CD8-positive, alpha-beta T cell (primary cell): ENCODE measurements at regions of chr12 and their contacts with region 1.

Region 1: DNA sequence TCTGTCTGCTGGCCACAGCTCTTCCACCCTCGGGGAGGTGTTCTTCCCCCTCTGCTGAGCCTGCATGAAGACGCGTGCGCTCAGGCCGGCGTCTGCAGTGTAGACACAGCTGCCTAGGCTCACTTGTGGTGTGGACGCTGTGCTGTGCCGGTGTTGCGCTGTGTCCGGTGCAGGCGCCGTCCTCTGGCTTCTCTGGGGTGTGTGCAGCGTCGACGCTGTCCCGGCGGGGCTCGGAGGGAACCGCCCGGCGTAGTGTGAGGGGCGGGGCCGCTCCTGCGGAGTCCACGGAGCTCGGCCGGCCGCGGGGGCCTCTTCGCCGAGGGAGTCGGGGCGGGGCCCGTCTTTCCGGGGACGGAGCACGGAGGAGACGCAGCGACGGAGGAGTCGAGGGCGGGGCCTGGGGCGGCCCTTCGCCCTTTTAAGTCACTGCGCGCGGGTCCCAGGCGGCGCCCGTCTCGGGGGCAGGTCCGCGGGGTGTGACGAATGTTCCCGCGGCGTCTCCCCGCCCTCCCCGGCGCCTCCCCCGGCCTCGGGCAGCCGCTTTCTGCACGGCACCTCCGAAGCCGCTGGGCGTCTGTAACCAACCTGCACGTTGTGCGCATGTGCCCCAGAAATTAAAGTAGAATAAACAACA is 45.2 kb downstream of the NOC4L start:
- DNase-seq: peak; percentile 88 to 97 (median 93)
- ATAC-seq: peak; percentile 88
- H3K4me3 ChIP-seq: peak overlapping the region; percentile 71 to 94
- H3K4me3 Mint-ChIP-seq: peak overlapping the region; percentile 94
- H3K27ac ChIP-seq: peak overlapping the region; percentile 80 to 81
- H3K27ac Mint-ChIP-seq: peak overlapping the region; percentile 96
- H3K4me1 ChIP-seq: peaks cover 47% of the 10 kb centered on the region
- H3K4me1 Mint-ChIP-seq: peaks cover 50% of the 10 kb centered on the region
- H3K27me3 ChIP-seq: no peaks in the 10 kb centered on the region
- H3K27me3 Mint-ChIP-seq: no peaks in the 10 kb centered on the region
- CTCF ChIP-seq: no peak

Region 2: DNA sequence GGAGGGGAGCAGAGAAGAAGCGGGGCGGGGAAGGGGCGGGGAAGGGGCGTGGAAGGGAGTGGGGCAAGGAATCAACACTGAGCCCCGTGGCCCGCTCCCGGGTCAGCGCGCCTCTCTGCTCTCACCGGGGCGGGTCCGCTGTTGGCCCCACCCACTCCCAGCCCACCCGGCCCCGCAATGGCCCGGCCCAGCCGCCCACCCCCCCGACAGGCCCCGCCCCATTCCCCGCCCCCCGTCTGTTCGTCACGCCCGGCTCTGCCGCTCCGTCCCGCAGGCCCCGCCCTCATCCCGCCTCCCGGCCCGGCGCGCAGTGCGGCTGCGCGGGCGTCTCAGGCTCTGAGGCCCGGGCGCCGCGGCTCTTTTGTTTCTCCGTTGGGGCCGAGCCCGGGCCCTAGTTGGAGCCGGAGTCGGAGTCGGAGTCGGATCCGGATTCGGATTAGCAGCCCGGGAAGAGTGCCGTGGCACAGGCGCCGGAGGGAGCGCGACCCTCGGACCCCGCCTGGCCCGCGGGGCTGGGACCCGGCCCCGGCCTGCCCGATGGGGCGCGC is 295.1 kb before region 1 on chr12 and contains the start of gene ULK1:
- CTCF ChIA-PET with region 1: no interaction called
- POLR2A ChIA-PET with region 1: no interaction called
- intact Hi-C with region 1: loop called in 1 of 2 experiments (anchors 5 kb)
- DNase-seq: peak; percentile 82 to 96 (median 92)
- ATAC-seq: peak; percentile 85
- H3K4me3 ChIP-seq: peak within 1 kb of the TSS; percentile 55 to 77
- H3K4me3 Mint-ChIP-seq: peak within 1 kb of the TSS; percentile 90
- H3K27ac ChIP-seq: peak within 1 kb of the TSS in 1 of 2 experiments; percentile 43
- H3K27ac Mint-ChIP-seq: peak within 1 kb of the TSS; percentile 79
- H3K4me1 ChIP-seq: peaks cover 16% of the 10 kb centered on the region
- H3K4me1 Mint-ChIP-seq: peaks cover 18% of the 10 kb centered on the region
- H3K27me3 ChIP-seq: no peaks in the 10 kb centered on the region
- H3K27me3 Mint-ChIP-seq: no peaks in the 10 kb centered on the region
- CTCF ChIP-seq: no peak
- total RNA-seq, gene ULK1: 76.6 to 79.9 TPM

Region 3: GRCh38 chr12:132083941-132084620 is 105.4 kb before region 1 on chr12:
- CTCF ChIA-PET with region 1: no interaction called
- POLR2A ChIA-PET with region 1: no interaction called
- intact Hi-C with region 1: loop called in 1 of 2 experiments (anchors 2 kb)
- DNase-seq: peak; percentile 74 to 94 (median 85)
- ATAC-seq: peak; percentile 92
- H3K4me3 ChIP-seq: peak overlapping the region; percentile 62 to 63
- H3K4me3 Mint-ChIP-seq: peak overlapping the region; percentile 85
- H3K27ac ChIP-seq: peak overlapping the region; percentile 70 to 88
- H3K27ac Mint-ChIP-seq: peak overlapping the region; percentile 85
- H3K4me1 ChIP-seq: peaks cover 23% of the 10 kb centered on the region
- H3K4me1 Mint-ChIP-seq: peaks cover 30% of the 10 kb centered on the region
- H3K27me3 ChIP-seq: no peaks in the 10 kb centered on the region
- H3K27me3 Mint-ChIP-seq: no peaks in the 10 kb centered on the region
- CTCF ChIP-seq: no peak

Region 4: DNA sequence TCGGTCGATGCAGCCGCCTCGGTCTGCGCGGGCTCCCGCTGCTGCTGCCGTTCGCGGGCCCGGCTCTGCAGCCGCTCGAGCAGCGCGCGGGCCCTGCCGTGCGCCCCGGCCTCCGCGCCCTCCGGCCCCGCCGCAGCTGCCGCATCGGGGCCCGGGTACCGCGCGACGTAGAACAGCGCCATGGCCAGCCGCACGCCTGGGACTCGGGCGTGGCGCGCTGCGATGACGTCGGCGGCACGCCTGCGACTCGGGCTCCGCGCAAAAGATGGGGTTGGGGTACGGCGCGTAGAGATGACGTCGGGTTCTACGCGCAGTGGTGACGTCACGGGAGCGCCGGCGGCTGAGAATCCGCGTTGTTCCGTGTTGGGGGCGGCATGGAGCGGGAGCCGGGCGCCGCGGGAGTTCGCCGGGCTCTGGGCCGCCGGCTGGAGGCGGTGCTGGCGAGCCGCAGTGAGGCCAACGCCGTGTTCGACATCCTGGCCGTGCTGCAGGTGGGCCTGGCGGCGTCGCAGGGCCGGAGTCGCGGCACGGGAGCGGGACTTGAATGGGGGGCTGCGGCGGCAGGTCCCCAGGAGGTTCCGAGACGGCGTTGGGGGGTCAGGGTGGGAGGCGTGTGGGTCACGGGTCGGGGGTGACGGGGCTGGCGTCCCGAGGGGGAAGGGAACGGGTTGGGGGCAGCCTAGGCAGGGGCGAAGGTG is 45.2 kb before region 1 on chr12 and contains the starts of genes DDX51 and NOC4L:
- CTCF ChIA-PET with region 1: interaction called, 4 read pairs
- POLR2A ChIA-PET with region 1: interaction called, 3 read pairs
- intact Hi-C with region 1: loop called (anchors 1 to 2 kb)
- DNase-seq: peak; percentile 92 to 98 (median 96)
- ATAC-seq: peak; percentile 89
- H3K4me3 ChIP-seq: peak within 1 kb of the TSS; percentile 80 to 98
- H3K4me3 Mint-ChIP-seq: peak within 1 kb of the TSS; percentile 95
- H3K27ac ChIP-seq: peak within 1 kb of the TSS; percentile 84 to 90
- H3K27ac Mint-ChIP-seq: peak within 1 kb of the TSS; percentile 98
- H3K4me1 ChIP-seq: peaks cover 24% of the 10 kb centered on the region
- H3K4me1 Mint-ChIP-seq: peaks cover 27% of the 10 kb centered on the region
- H3K27me3 ChIP-seq: no peaks in the 10 kb centered on the region
- H3K27me3 Mint-ChIP-seq: no peaks in the 10 kb centered on the region
- CTCF ChIP-seq: no peak
- total RNA-seq, gene DDX51: 61.5 to 66.5 TPM
- total RNA-seq, gene NOC4L: 25.8 to 28.3 TPM

Region 5: GRCh38 chr12:132178801-132179401 is 10.6 kb before region 1 on chr12:
- CTCF ChIA-PET with region 1: interaction called, 7 read pairs
- POLR2A ChIA-PET with region 1: interaction called, 10 read pairs
- intact Hi-C with region 1: no loop called
- DNase-seq: peak in 4 of 9 experiments; percentile 31 to 68 (median 58)
- ATAC-seq: peak; percentile 79
- H3K4me3 ChIP-seq: peak overlapping the region; percentile 1 to 7
- H3K4me3 Mint-ChIP-seq: peak overlapping the region; percentile 75
- H3K27ac ChIP-seq: peak overlapping the region in 1 of 2 experiments; percentile 17
- H3K27ac Mint-ChIP-seq: peak overlapping the region; percentile 81
- H3K4me1 ChIP-seq: peaks cover 26% of the 10 kb centered on the region
- H3K4me1 Mint-ChIP-seq: peaks cover 28% of the 10 kb centered on the region
- H3K27me3 ChIP-seq: peaks cover 4 to 7% of the 10 kb centered on the region in 2 experiments
- H3K27me3 Mint-ChIP-seq: peaks cover 7% of the 10 kb centered on the region
- CTCF ChIP-seq: no peak

Region 6: DNA sequence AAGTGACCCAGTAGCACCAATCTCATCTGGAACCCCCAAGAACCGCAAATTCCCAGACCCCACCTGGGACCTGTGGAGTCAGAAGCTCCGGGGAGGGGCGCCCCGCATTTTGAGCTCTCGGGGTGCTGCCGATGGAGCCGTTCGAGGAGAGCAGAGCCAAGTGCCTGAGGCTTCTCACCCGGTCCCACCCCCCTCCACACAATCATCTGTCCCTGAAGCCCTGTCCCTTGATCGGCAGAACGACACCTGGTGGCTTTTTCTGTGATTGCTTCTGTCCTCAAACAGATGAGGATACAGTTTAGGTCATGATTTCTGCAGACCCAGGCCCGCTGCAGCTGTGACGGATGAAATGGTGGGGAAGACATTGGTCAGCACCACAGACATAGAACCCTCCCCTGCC is 29.4 kb after region 1 on chr12:
- CTCF ChIA-PET with region 1: interaction called, 8 read pairs
- POLR2A ChIA-PET with region 1: interaction called, 3 read pairs
- intact Hi-C with region 1: loop called in 1 of 2 experiments (anchors 2 kb)
- DNase-seq: peak in 7 of 9 experiments; percentile 6 to 74 (median 53)
- ATAC-seq: peak; percentile 72
- H3K4me3 ChIP-seq: no peak overlapping the region
- H3K4me3 Mint-ChIP-seq: no peak overlapping the region
- H3K27ac ChIP-seq: no peak overlapping the region
- H3K27ac Mint-ChIP-seq: no peak overlapping the region
- H3K4me1 ChIP-seq: peaks cover 10% of the 10 kb centered on the region
- H3K4me1 Mint-ChIP-seq: peaks cover 11% of the 10 kb centered on the region
- H3K27me3 ChIP-seq: peaks cover 0 to 4% of the 10 kb centered on the region in 2 experiments
- H3K27me3 Mint-ChIP-seq: peaks cover 20% of the 10 kb centered on the region
- CTCF ChIP-seq: peak; percentile 61

Region 7: GRCh38 chr12:132321321-132322118 is 132.0 kb after region 1 on chr12:
- CTCF ChIA-PET with region 1: no interaction called
- POLR2A ChIA-PET with region 1: no interaction called
- intact Hi-C with region 1: no loop called
- DNase-seq: no peak
- ATAC-seq: no peak
- H3K4me3 ChIP-seq: no peak overlapping the region
- H3K4me3 Mint-ChIP-seq: no peak overlapping the region
- H3K27ac ChIP-seq: no peak overlapping the region
- H3K27ac Mint-ChIP-seq: no peak overlapping the region
- H3K4me1 ChIP-seq: no peaks in the 10 kb centered on the region
- H3K4me1 Mint-ChIP-seq: peaks cover 5% of the 10 kb centered on the region
- H3K27me3 ChIP-seq: no peaks in the 10 kb centered on the region
- H3K27me3 Mint-ChIP-seq: peaks cover 13% of the 10 kb centered on the region
- CTCF ChIP-seq: no peak

Region 8: DNA sequence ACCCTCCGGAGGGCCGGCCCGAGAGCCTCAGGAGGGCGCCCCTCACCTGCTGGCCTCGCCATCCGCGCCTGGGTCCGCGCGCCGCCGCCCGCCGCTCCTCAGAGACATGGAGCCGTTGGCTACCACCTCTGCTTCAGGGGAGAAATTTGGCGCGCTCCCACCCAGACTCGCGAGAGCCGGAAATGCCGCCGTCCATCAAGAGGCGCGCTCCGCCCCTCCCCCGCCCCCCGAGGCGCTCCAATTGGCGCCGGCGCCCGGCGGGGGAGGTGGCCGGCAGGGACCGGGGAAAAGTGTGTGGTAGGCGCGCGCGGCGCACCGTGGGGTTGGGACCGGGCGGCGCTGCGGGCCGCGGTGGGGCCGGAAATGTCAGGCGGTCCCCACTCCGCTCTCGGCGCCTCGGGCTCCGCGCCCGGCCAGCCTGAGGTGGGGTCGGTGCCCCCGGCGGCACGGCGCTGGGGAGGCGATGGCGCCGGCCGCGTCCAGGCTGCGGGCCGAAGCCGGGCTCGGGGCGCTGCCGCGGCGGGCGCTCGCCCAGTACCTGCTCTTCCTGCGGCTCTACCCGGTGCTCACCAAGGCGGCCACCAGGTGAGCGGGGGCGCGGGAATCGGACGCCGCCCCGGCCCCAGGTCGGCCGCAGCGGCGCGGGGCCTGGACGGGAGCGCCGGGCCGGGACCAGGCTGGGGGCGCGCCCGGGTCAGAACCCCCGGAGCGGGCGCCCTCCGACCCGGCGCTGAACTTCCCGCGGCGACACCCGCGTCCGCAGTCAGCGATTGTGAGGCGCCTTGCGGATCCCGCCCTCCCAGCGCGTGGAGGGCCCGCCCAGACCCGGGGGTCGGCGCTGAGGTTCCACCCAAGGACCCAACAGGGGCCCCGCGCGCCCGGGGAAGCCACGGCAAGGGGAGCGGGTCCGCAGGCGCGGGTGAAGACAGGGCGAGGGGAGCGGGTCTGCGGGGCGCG is 498.0 kb after region 1 on chr12 and contains the starts of genes POLE and PXMP2:
- CTCF ChIA-PET with region 1: no interaction called
- POLR2A ChIA-PET with region 1: no interaction called
- intact Hi-C with region 1: loop called in 1 of 2 experiments (anchors 2 kb)
- DNase-seq: peak; percentile 88 to 98 (median 94)
- ATAC-seq: peak; percentile 95
- H3K4me3 ChIP-seq: peak within 1 kb of the TSS; percentile 38 to 58
- H3K4me3 Mint-ChIP-seq: peak within 1 kb of the TSS; percentile 82
- H3K27ac ChIP-seq: peak within 1 kb of the TSS in 1 of 2 experiments; percentile 27
- H3K27ac Mint-ChIP-seq: peak within 1 kb of the TSS; percentile 55
- H3K4me1 ChIP-seq: peaks cover 7% of the 10 kb centered on the region
- H3K4me1 Mint-ChIP-seq: peaks cover 14% of the 10 kb centered on the region
- H3K27me3 ChIP-seq: no peaks in the 10 kb centered on the region
- H3K27me3 Mint-ChIP-seq: no peaks in the 10 kb centered on the region
- CTCF ChIP-seq: no peak
- total RNA-seq, gene POLE: 25.9 to 31.1 TPM
- total RNA-seq, gene PXMP2: 1.2 to 1.8 TPM

Region 9: GRCh38 chr12:132798836-132799235 is 609.3 kb after region 1 on chr12:
- CTCF ChIA-PET with region 1: no interaction called
- POLR2A ChIA-PET with region 1: no interaction called
- intact Hi-C with region 1: no loop called
- DNase-seq: no peak
- ATAC-seq: no peak
- H3K4me3 ChIP-seq: no peak overlapping the region
- H3K4me3 Mint-ChIP-seq: no peak overlapping the region
- H3K27ac ChIP-seq: no peak overlapping the region
- H3K27ac Mint-ChIP-seq: no peak overlapping the region
- H3K4me1 ChIP-seq: no peaks in the 10 kb centered on the region
- H3K4me1 Mint-ChIP-seq: no peaks in the 10 kb centered on the region
- H3K27me3 ChIP-seq: no peaks in the 10 kb centered on the region
- H3K27me3 Mint-ChIP-seq: no peaks in the 10 kb centered on the region
- CTCF ChIP-seq: no peak